Activated CD4-positive, alpha-beta T cell treated with anti-CD3 and anti-CD28 coated beads, Interleukin-2, amount 10 ng/mL, durations not matched to agents 24 days and 14 days (primary cell): ENCODE measurements at regions of chr5 and their contacts with region 1.

Region 1: GRCh38 chr5:179858586-179859427 is at the start of gene MRNIP:
- DNase-seq: peak; percentile 97
- H3K4me3 Mint-ChIP-seq: peak within 1 kb of the TSS; percentile 98
- H3K27ac Mint-ChIP-seq: peak within 1 kb of the TSS; percentile 94
- H3K4me1 Mint-ChIP-seq: peaks cover 11% of the 10 kb centered on the region
- H3K27me3 Mint-ChIP-seq: no peaks in the 10 kb centered on the region
- total RNA-seq, gene MRNIP: 27.6 and 27.8 TPM in 2 replicates

Region 2: GRCh38 chr5:179763215-179763945 is 95.4 kb before region 1 on chr5:
- intact Hi-C with region 1: loop called (anchors 5 kb)
- DNase-seq: peak; percentile 83
- H3K4me3 Mint-ChIP-seq: no peak overlapping the region
- H3K27ac Mint-ChIP-seq: no peak overlapping the region
- H3K4me1 Mint-ChIP-seq: peaks cover 47% of the 10 kb centered on the region
- H3K27me3 Mint-ChIP-seq: no peaks in the 10 kb centered on the region

Region 3: DNA sequence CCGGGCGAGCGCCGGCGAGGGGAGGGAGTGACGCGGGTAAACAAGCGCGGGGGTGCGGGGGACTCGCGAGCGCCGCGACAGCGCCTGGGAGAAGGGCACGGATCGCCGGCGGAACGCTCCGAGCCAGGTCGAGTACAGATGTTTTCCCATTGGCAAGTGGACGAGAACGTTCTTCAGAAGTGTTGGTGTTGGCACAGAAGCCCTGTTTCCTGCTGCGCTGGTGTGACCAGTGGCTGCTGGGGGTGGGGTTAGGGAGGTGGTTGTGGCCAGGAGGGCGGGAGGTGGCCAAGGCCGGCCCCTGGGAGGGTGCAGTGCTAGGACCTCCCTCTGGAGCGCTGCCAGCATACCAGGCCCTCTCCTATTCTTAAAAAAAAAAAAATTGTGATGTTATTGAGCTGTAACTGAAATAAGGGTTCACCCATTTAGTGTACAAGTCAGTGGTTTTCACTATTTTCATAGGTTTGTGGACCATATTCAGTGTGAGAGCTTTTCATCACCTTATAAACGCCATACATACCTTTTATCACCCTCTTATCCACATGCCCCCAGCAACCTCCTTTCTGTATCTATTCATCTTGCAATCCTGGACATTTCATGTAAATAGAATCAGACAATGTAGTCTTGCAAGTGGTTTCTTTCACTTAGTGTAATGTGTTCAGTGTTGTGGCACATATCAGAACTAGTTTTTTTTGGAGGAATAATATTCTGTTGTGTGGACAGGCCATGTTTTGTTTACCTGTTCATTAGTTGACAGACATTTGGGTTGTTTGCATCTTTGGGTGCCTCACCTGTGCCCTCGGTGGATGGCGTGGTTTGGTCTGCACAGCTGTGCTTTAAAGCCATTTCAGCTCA is 37.0 kb before region 1 on chr5:
- intact Hi-C with region 1: loop called (anchors 1 kb)
- DNase-seq: peak; percentile 96
- H3K4me3 Mint-ChIP-seq: peak overlapping the region; percentile 96
- H3K27ac Mint-ChIP-seq: peak overlapping the region; percentile 91
- H3K4me1 Mint-ChIP-seq: peaks cover 35% of the 10 kb centered on the region
- H3K27me3 Mint-ChIP-seq: no peaks in the 10 kb centered on the region

Region 4: GRCh38 chr5:179907570-179908324 is 48.9 kb after region 1 on chr5 and contains the start of gene TBC1D9B:
- intact Hi-C with region 1: loop called (anchors 2 kb)
- DNase-seq: peak; percentile 92
- H3K4me3 Mint-ChIP-seq: peak within 1 kb of the TSS; percentile 96
- H3K27ac Mint-ChIP-seq: peak within 1 kb of the TSS; percentile 92
- H3K4me1 Mint-ChIP-seq: peaks cover 11% of the 10 kb centered on the region
- H3K27me3 Mint-ChIP-seq: no peaks in the 10 kb centered on the region
- total RNA-seq, gene TBC1D9B: 129 and 138 TPM in 2 replicates

Region 5: GRCh38 chr5:180212363-180213255 is 353.8 kb after region 1 on chr5:
- intact Hi-C with region 1: no loop called
- DNase-seq: no peak
- H3K4me3 Mint-ChIP-seq: no peak overlapping the region
- H3K27ac Mint-ChIP-seq: no peak overlapping the region
- H3K4me1 Mint-ChIP-seq: peaks cover 4% of the 10 kb centered on the region
- H3K27me3 Mint-ChIP-seq: peaks cover 12% of the 10 kb centered on the region